HepG2 (cell line): ENCODE measurements at regions of chr2 and their contacts with region 1.

Region 1: DNA sequence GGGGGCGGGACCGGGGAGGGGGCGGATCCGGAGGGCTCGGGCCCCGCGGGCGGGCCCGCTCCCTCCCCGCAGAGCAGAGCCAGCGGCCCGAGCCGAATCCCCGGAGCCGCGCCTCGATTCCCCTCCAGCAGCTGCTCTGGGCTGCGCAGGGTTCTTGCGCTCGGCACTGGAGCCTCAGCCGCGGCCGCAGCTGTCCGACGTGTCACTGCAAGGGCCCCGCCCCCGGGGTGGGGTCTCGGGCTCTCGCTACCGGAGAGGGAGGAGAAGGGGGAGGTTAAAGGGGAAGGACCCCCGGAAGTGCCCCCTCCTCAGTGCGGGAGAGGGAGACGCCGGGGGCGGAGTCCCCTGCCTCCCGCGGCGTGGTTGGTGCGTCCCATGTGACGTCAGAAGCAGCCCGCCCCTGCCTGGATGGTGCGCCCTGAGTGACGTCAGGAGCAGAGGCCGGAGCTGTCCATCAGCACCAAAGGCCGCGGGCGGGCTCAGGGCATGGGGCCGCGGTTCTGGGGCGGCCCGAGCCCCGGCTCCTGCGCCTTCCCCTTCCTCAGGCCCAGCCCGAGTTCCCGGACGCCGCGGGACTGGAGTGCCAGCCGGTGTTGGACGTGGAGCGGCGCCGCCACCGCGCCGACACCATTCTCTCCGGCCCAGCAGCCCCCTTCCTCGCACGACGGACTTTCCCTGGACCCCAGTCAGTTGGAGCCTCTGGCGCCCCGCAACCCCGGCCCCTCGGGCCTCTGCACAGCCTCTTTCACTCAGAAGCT is at the starts of genes CHPF and TMEM198:
- DNase-seq: peak; percentile 99
- ATAC-seq: peak; percentile 78
- H3K4me3 ChIP-seq: peak within 1 kb of the TSS; percentile 87 to 90 (median 89)
- H3K27ac ChIP-seq: peak within 1 kb of the TSS; percentile 82
- H3K4me1 ChIP-seq: peaks cover 51% of the 10 kb centered on the region
- H3K27me3 ChIP-seq: no peaks in the 10 kb centered on the region; a peak in 1 of 5 replicates
- CTCF ChIP-seq: peak; percentile 31; the same call in 1 of the 2 replicates
- EP300 ChIP-seq: peak in 1 of 2 experiments; percentile 59; a peak in 1 of 4 replicates
- POLR2A ChIP-seq: peak in 1 of 2 experiments; percentile 71; a peak in 2 of 4 replicates
- RAD21 ChIP-seq: peak; percentile 47
- total RNA-seq, gene CHPF: 34.7 and 79.6 TPM in 2 replicates
- total RNA-seq, gene TMEM198: 11.6 and 17.3 TPM in 2 replicates

Region 2: GRCh38 chr2:219352448-219353023 is 191.2 kb before region 1 on chr2:
- CTCF ChIA-PET with region 1: no interaction called
- POLR2A ChIA-PET with region 1: no interaction called
- in situ Hi-C with region 1: no loop called
- intact Hi-C with region 1: no loop called
- DNase-seq: peak; percentile 55
- ATAC-seq: peak; percentile 89
- H3K4me3 ChIP-seq: no peak overlapping the region
- H3K27ac ChIP-seq: no peak overlapping the region
- H3K4me1 ChIP-seq: no peaks in the 10 kb centered on the region
- H3K27me3 ChIP-seq: peaks cover 0 to 58% of the 10 kb centered on the region in 2 experiments; a peak in 3 of 5 replicates
- CTCF ChIP-seq: peak; percentile 73
- EP300 ChIP-seq: no peak
- POLR2A ChIP-seq: no peak
- RAD21 ChIP-seq: 0 out of 2 replicates have a peak, but pooled peaks have one; percentile 32

Region 3: DNA sequence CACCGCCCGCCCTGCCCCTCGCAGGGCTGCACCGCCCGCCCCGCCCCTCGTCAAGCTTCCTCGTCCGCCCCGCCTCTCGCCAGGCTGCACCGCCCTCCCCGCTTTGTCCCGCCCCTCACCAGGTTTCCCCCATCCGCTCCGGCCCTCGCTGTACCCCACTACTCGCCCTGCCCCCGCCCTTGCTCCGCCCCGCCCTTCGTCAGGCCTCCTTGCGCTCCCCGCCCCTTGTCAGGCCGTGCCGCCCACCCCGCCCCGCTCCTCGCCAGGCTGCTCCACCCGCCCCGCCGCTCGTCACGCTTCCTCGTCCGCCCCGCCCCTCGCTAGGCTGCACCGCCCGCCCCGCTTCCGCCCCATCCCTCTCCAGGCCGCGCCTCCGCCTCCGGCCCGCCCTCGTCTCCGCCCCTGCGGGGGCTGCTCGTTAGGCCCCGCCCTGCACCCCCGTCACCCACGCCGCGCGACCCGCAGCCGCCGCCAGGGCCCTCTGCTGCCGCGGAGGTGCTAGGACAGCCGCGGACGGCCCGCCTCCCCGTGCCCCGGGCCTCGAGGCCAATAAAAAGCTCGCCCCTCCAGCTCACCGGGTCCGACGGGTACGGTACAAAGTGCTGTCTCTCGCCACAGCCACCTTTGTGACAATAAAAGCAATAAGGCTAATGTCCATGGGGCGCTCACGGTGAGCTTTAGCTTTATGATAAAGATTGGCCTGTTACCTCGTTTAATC is 155.5 kb before region 1 on chr2:
- CTCF ChIA-PET with region 1: no interaction called
- POLR2A ChIA-PET with region 1: interaction called, 15 read pairs
- in situ Hi-C with region 1: no loop called
- intact Hi-C with region 1: loop called (anchors 1 kb)
- DNase-seq: peak; percentile 87
- ATAC-seq: peak; percentile 74
- H3K4me3 ChIP-seq: peak overlapping the region; percentile 53 to 70 (median 68)
- H3K27ac ChIP-seq: peak overlapping the region; percentile 68
- H3K4me1 ChIP-seq: peaks cover 30% of the 10 kb centered on the region
- H3K27me3 ChIP-seq: no peaks in the 10 kb centered on the region; a peak in 1 of 5 replicates
- CTCF ChIP-seq: peak; percentile 78
- EP300 ChIP-seq: peak in 1 of 2 experiments; percentile 12; a peak in 1 of 4 replicates
- POLR2A ChIP-seq: peak; percentile 52 to 68; a peak in 3 of 4 replicates
- RAD21 ChIP-seq: peak; percentile 67; the same call in 1 of the 2 replicates

Region 4: DNA sequence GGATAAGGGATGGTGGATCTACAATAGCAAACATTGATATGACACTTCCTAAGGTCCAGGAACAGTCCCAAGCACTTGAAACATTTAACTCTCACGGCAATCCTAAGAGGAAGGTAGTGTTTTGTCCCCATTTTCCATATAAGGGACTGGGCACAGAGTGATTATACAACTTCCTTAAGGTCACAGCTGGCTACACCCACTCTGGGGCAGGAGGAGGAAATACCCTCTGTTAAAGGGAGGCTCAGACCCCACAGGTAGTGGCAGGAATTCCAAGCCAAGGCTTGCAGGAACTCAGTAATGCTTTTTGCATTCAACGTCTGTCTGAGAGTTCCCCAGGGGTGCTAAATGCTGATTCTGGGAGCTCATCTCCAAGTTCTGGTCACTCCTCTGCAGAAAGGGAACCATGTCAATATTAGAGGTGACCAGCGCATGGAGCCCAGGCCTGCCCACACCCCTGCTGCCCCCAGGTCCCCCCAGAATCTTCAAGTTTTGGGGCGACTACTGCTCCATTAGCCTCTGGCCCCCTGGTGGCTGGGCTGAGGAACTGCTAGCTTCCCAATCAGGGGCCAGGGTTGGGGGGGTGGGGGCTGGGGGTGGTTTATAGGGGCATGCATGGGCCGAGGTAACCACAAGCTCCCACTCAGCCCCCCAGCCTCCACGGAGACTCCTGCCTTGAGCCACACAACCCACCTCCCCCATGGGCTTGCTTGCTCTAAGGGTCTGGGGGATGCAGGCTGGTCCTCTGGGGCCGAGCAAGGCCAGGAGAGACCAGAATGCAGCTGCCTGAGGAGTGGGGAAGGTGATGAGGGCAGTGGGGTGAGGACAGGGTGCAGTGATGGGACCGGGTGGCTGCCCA is 16.5 kb after region 1 on chr2:
- CTCF ChIA-PET with region 1: interaction called, 28 read pairs
- POLR2A ChIA-PET with region 1: interaction called, 6 read pairs
- in situ Hi-C with region 1: no loop called
- intact Hi-C with region 1: loop called (anchors 2 kb)
- DNase-seq: no peak
- ATAC-seq: peak; percentile 18
- H3K4me3 ChIP-seq: no peak overlapping the region
- H3K27ac ChIP-seq: no peak overlapping the region
- H3K4me1 ChIP-seq: peaks cover 35% of the 10 kb centered on the region
- H3K27me3 ChIP-seq: no peaks in the 10 kb centered on the region
- CTCF ChIP-seq: peak; percentile 62
- EP300 ChIP-seq: no peak
- POLR2A ChIP-seq: no peak
- RAD21 ChIP-seq: no peak

Region 5: GRCh38 chr2:219576493-219577388 is 33.0 kb after region 1 on chr2:
- CTCF ChIA-PET with region 1: no interaction called
- POLR2A ChIA-PET with region 1: interaction called, 32 read pairs
- in situ Hi-C with region 1: no loop called
- intact Hi-C with region 1: loop called (anchors 1 kb)
- DNase-seq: peak; percentile 100
- ATAC-seq: peak; percentile 94
- H3K4me3 ChIP-seq: peak overlapping the region in 2 of 3 experiments; percentile 23 to 45; a peak in 3 of 6 replicates
- H3K27ac ChIP-seq: peak overlapping the region; percentile 86
- H3K4me1 ChIP-seq: peaks cover 81% of the 10 kb centered on the region
- H3K27me3 ChIP-seq: no peaks in the 10 kb centered on the region
- CTCF ChIP-seq: peak; percentile 32; the same call in 1 of the 2 replicates
- EP300 ChIP-seq: peak; percentile 61 to 96; a peak in 3 of 4 replicates
- POLR2A ChIP-seq: no peak; a peak in 1 of 4 replicates
- RAD21 ChIP-seq: peak; percentile 55; the same call in 1 of the 2 replicates

Region 6: GRCh38 chr2:219689676-219690628 is 146.2 kb after region 1 on chr2:
- CTCF ChIA-PET with region 1: interaction called, 20 read pairs
- POLR2A ChIA-PET with region 1: interaction called, 3 read pairs
- in situ Hi-C with region 1: no loop called
- intact Hi-C with region 1: loop called (anchors 1 kb)
- DNase-seq: peak; percentile 51
- ATAC-seq: 0 out of 3 replicates have a peak, but pooled peaks have one; percentile 14
- H3K4me3 ChIP-seq: no peak overlapping the region
- H3K27ac ChIP-seq: no peak overlapping the region
- H3K4me1 ChIP-seq: peaks cover 34% of the 10 kb centered on the region
- H3K27me3 ChIP-seq: peaks cover 0 to 41% of the 10 kb centered on the region in 2 experiments; a peak in 3 of 5 replicates
- CTCF ChIP-seq: peak; percentile 81
- EP300 ChIP-seq: no peak
- POLR2A ChIP-seq: no peak
- RAD21 ChIP-seq: 0 out of 2 replicates have a peak, but pooled peaks have one; percentile 29